ENCODE measurements at regions of chr13 and their contacts with region 1.

Region 1: GRCh38 chr13:36736119-36736726 is 62.4 kb downstream of the SERTM1 start:
- DNase-seq: peak; percentile 37
- H3K4me3 ChIP-seq: no peak overlapping the region
- H3K27ac ChIP-seq: no peak overlapping the region
- H3K27me3 ChIP-seq: no peaks in the 10 kb centered on the region
- CTCF ChIP-seq: peak; percentile 74

Region 2: GRCh38 chr13:35978603-35979316 is 757.5 kb before region 1 on chr13:
- CTCF ChIA-PET with region 1: interaction called, 24 read pairs
- POLR2A ChIA-PET with region 1: no interaction called
- DNase-seq: no peak
- H3K4me3 ChIP-seq: no peak overlapping the region
- H3K27ac ChIP-seq: peak overlapping the region; percentile 43
- H3K27me3 ChIP-seq: no peaks in the 10 kb centered on the region
- CTCF ChIP-seq: peak; percentile 69

Region 3: DNA sequence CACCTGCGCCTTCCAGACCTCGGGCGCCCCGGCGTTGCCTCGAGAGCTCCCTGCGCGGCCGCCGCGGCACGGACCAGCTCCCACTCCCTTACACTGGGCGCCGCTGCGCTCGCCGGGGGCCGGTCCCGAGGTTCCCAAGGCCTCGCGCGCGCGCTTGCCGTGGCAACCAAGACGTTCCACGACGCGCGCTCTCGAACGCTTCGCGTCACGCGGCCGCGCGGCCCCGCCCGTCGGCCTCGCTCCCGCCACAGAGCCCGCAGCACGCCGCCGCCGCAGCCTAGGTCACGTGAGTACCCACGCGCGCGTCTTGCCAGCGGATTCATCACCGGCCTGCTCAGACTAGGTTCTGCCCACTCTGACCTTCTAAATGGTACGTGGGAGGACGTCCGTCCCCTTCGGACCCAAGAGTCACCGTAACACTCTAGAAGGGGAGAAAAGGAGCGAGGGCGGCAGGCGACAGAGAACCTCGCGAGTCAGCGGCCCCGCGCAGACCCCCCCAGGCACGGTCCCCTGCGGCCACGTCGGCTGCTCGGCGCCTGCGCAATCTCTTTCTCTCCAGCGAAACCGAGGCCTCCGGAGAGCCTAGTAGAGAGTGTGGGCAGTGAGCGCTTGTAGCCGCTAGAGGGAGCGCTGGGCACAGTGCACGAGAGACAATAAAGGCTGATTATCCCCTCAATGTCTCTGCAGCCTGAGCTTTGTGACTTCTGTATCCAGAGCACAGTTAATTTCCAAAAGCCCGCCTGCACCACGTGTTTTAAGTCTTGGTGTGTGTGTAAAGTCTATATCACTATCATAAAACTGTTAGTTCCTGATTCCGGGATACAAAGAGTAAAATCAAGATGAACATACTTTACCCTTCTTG is 389.8 kb before region 1 on chr13 and contains the start of gene SPART:
- CTCF ChIA-PET with region 1: interaction called, 16 read pairs
- POLR2A ChIA-PET with region 1: no interaction called
- DNase-seq: peak; percentile 78
- H3K4me3 ChIP-seq: peak within 1 kb of the TSS; percentile 83
- H3K27ac ChIP-seq: peak within 1 kb of the TSS; percentile 100
- H3K27me3 ChIP-seq: no peaks in the 10 kb centered on the region
- CTCF ChIP-seq: peak; percentile 98
- polyA plus RNA-seq, gene SPART: 69.7 and 94.6 TPM in 2 replicates

Region 4: GRCh38 chr13:36420437-36420891 is 315.8 kb before region 1 on chr13:
- CTCF ChIA-PET with region 1: interaction called, 61 read pairs
- POLR2A ChIA-PET with region 1: no interaction called
- DNase-seq: peak; percentile 23
- H3K4me3 ChIP-seq: no peak overlapping the region
- H3K27ac ChIP-seq: no peak overlapping the region
- H3K27me3 ChIP-seq: no peaks in the 10 kb centered on the region
- CTCF ChIP-seq: peak; percentile 91

Region 5: DNA sequence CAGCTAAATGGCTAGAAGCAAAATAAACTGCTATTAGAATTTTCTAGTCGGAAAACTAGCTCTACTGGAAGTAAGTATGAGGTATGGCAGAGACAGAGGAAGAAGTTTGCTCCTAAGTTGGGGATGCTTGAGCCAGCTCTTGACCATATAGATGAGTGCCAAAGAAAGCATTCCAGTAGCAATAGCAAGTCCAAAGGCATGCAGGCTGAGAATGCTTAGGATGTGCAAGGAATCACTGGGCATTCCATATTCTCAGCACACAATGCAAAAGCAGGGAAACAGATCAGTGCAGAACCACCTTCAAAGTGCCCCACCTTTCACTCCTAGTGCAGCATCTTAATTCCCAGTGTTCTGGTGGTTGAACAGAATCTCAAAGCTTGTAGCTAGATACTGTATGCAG is 29.5 kb before region 1 on chr13:
- CTCF ChIA-PET with region 1: interaction called, 11 read pairs
- POLR2A ChIA-PET with region 1: no interaction called
- DNase-seq: peak; percentile 13
- H3K4me3 ChIP-seq: no peak overlapping the region
- H3K27ac ChIP-seq: no peak overlapping the region
- H3K27me3 ChIP-seq: peaks cover 3% of the 10 kb centered on the region
- CTCF ChIP-seq: no peak

Region 6: GRCh38 chr13:36717966-36718545 is 18.2 kb before region 1 on chr13:
- CTCF ChIA-PET with region 1: interaction called, 16 read pairs
- POLR2A ChIA-PET with region 1: no interaction called
- DNase-seq: no peak
- H3K4me3 ChIP-seq: no peak overlapping the region
- H3K27ac ChIP-seq: no peak overlapping the region
- H3K27me3 ChIP-seq: no peaks in the 10 kb centered on the region
- CTCF ChIP-seq: no peak